CD4-positive, alpha-beta memory T cell (primary cell): ENCODE measurements at regions of chr6 and their contacts with region 1.

Region 1: GRCh38 chr6:83215131-83216047 is 22.2 kb downstream of the RWDD2A start:
- DNase-seq: peak; percentile 49 to 51 (median 50)
- H3K4me3 ChIP-seq: no peak overlapping the region
- H3K4me3 Mint-ChIP-seq: no peak overlapping the region
- H3K27ac ChIP-seq: no peak overlapping the region
- H3K27ac Mint-ChIP-seq: no peak overlapping the region
- H3K4me1 ChIP-seq: no peaks in the 10 kb centered on the region
- H3K4me1 Mint-ChIP-seq: no peaks in the 10 kb centered on the region
- H3K27me3 ChIP-seq: no peaks in the 10 kb centered on the region
- H3K27me3 Mint-ChIP-seq: peaks cover 3 to 9% of the 10 kb centered on the region in 2 donors

Region 2: DNA sequence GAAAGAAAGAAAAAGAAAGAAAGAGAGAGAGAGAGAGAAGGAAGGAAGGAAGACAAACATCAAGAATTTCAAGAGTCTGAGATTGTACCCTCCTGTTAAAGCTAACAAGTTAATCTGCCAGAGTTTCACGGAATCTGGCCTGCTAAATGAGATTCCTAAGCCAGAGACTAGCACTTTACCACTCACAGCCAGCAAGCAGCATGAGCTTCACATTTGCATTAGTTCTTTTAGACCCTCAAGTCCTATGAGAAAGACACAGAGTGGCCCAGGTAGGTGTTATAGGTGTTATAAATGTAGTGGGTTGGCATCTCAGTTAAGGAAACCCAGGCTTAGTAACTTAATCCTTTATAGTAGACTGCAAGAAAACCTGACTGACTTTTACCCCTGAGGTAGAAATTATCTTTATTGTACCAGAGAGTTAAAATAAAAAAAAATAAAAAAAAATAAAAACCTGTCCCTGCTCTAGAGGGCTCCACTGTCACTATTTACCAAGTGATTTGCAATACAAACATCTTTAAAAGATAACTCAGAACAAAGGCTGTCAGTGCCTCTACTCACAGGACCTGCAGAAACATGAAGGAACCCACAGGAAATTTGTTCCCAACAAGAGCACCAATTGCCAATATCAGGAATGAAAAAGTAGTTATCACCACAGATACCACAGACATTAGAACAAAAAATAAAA is 958.2 kb before region 1 on chr6:
- CTCF ChIA-PET with region 1: no interaction called
- POLR2A ChIA-PET with region 1: no interaction called
- intact Hi-C with region 1: loop called (anchors 5 kb)
- DNase-seq: no peak
- H3K4me3 ChIP-seq: no peak overlapping the region
- H3K4me3 Mint-ChIP-seq: no peak overlapping the region
- H3K27ac ChIP-seq: no peak overlapping the region
- H3K27ac Mint-ChIP-seq: peak overlapping the region in 1 of 7 donors; percentile 30
- H3K4me1 ChIP-seq: no peaks in the 10 kb centered on the region
- H3K4me1 Mint-ChIP-seq: no peaks in the 10 kb centered on the region
- H3K27me3 ChIP-seq: no peaks in the 10 kb centered on the region
- H3K27me3 Mint-ChIP-seq: peaks cover 0 to 2% of the 10 kb centered on the region in 2 donors

Region 3: GRCh38 chr6:83073615-83074014 is 141.8 kb before region 1 on chr6:
- CTCF ChIA-PET with region 1: interaction called, 186 read pairs
- POLR2A ChIA-PET with region 1: interaction called, 18 read pairs
- intact Hi-C with region 1: no loop called
- DNase-seq: no peak
- H3K4me3 ChIP-seq: no peak overlapping the region
- H3K4me3 Mint-ChIP-seq: no peak overlapping the region
- H3K27ac ChIP-seq: no peak overlapping the region
- H3K27ac Mint-ChIP-seq: no peak overlapping the region
- H3K4me1 ChIP-seq: peaks cover 15% of the 10 kb centered on the region
- H3K4me1 Mint-ChIP-seq: peaks cover 16 to 38% (median 21%) of the 10 kb centered on the region in 4 donors
- H3K27me3 ChIP-seq: no peaks in the 10 kb centered on the region
- H3K27me3 Mint-ChIP-seq: no peaks in the 10 kb centered on the region

Region 4: GRCh38 chr6:83138118-83138722 is 77.2 kb before region 1 on chr6:
- CTCF ChIA-PET with region 1: no interaction called
- POLR2A ChIA-PET with region 1: no interaction called
- intact Hi-C with region 1: loop called (anchors 5 kb)
- DNase-seq: no peak
- H3K4me3 ChIP-seq: no peak overlapping the region
- H3K4me3 Mint-ChIP-seq: no peak overlapping the region
- H3K27ac ChIP-seq: no peak overlapping the region
- H3K27ac Mint-ChIP-seq: no peak overlapping the region
- H3K4me1 ChIP-seq: no peaks in the 10 kb centered on the region
- H3K4me1 Mint-ChIP-seq: no peaks in the 10 kb centered on the region
- H3K27me3 ChIP-seq: no peaks in the 10 kb centered on the region
- H3K27me3 Mint-ChIP-seq: no peaks in the 10 kb centered on the region

Region 5: DNA sequence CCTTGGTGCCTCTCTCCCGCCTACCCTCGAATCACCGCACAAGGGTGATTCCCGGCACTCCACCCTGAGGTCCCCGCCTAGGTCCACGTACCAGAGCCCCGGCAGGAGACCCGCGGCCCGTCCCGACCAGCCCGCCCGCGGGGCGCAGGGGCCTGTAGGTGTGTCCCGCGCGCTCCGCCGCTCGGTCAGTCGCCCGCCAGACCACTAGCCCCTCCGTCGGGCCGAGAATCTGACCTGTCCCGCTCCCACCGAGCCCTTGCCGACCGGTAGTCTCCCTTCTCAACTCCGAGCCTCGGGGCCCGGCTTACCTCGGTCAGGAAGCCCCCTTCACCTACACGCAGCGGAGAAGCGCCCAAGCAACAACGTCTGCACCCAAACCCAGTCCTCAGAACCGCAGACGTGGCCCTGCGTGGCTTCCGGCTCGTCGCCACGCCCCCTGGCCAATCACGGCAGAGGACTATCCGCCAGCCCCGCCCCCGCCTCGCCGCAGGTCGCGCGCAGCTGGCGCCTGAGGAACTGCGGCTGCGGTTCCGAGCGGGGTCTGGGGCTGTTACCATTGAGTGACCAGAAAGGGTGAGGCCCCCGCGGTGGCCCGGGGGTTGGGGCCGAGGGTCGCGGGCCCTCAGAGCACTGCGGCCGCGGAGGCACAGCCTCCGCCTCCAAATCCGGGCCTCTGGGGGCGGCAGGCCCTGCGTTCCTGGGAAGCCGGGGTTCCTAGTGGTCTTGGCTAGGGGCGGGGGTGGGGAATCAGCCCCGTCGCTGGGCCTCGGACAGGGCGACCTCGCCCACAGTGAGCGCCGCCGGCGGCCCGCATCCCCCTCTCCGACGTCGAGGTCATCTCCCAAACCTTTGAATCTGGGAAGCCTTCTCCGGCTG is 22.3 kb before region 1 on chr6 and contains the starts of genes PGM3 and RWDD2A:
- CTCF ChIA-PET with region 1: interaction called, 12 read pairs
- POLR2A ChIA-PET with region 1: no interaction called
- intact Hi-C with region 1: loop called (anchors 1 kb)
- DNase-seq: peak; percentile 87 to 90 (median 90)
- H3K4me3 ChIP-seq: peak within 1 kb of the TSS; percentile 65 to 71
- H3K4me3 Mint-ChIP-seq: peak within 1 kb of the TSS; percentile 96 to 99 (median 98)
- H3K27ac ChIP-seq: peak within 1 kb of the TSS; percentile 88
- H3K27ac Mint-ChIP-seq: peak within 1 kb of the TSS; percentile 87 to 99 (median 98)
- H3K4me1 ChIP-seq: peaks cover 21% of the 10 kb centered on the region
- H3K4me1 Mint-ChIP-seq: peaks cover 32 to 66% (median 49%) of the 10 kb centered on the region in 4 donors
- H3K27me3 ChIP-seq: no peaks in the 10 kb centered on the region
- H3K27me3 Mint-ChIP-seq: no peaks in the 10 kb centered on the region
- total RNA-seq, gene PGM3: 35.9 to 39.9 TPM
- total RNA-seq, gene RWDD2A: 5.0 to 5.2 TPM

Region 6: GRCh38 chr6:83199863-83200225 is 15.5 kb before region 1 on chr6:
- CTCF ChIA-PET with region 1: interaction called, 29 read pairs
- POLR2A ChIA-PET with region 1: no interaction called
- intact Hi-C with region 1: no loop called
- DNase-seq: no peak
- H3K4me3 ChIP-seq: no peak overlapping the region
- H3K4me3 Mint-ChIP-seq: no peak overlapping the region
- H3K27ac ChIP-seq: no peak overlapping the region
- H3K27ac Mint-ChIP-seq: no peak overlapping the region
- H3K4me1 ChIP-seq: no peaks in the 10 kb centered on the region
- H3K4me1 Mint-ChIP-seq: peaks cover 2 to 15% (median 7%) of the 10 kb centered on the region in 4 donors
- H3K27me3 ChIP-seq: no peaks in the 10 kb centered on the region
- H3K27me3 Mint-ChIP-seq: no peaks in the 10 kb centered on the region